GM13977 (cell line): ENCODE measurements at regions of chr22 and their contacts with region 1.

Region 1: DNA sequence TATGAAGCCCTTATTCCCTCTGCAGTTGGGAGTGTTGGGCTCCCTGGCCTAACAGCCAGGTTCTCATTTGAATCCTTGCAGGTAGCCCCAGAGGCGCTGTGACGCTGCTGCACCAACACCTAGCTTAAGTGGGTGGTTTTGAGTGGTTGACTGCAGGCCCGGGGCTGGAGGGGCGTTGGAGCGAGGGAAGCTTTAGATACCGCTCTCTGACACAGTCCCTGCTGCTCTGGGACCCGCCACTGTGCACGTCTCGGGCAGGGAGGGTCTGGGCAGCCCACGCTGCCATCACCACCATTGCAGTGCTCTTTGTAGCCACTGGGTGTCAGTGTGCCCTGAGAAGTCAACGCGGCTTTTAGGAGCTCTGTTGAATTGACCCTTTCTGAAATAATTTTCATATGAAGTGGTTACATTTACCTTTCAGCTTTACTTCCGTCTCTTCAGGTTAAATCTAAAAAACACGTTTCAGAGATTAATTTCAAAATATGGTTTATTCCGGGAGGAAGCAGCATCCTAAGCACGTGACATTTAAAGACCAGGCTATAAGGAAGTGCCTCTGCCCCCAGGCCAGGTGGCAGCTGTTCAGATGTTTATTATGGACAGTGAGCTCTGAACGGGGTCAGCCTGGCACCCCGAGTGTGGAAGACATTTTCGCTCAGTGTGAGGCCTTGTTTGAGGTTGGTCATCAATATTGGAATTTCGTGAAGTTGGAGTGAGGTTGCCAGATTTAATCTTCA is 30.9 kb upstream of the PARVB start:
- DNase-seq: peak; percentile 84
- CTCF ChIP-seq: peak; percentile 98

Region 2: GRCh38 chr22:44075670-44076069 is 82.5 kb after region 1 on chr22:
- in situ Hi-C with region 1: loop called (anchors 5 kb)
- DNase-seq: no peak
- CTCF ChIP-seq: no peak

Region 3: DNA sequence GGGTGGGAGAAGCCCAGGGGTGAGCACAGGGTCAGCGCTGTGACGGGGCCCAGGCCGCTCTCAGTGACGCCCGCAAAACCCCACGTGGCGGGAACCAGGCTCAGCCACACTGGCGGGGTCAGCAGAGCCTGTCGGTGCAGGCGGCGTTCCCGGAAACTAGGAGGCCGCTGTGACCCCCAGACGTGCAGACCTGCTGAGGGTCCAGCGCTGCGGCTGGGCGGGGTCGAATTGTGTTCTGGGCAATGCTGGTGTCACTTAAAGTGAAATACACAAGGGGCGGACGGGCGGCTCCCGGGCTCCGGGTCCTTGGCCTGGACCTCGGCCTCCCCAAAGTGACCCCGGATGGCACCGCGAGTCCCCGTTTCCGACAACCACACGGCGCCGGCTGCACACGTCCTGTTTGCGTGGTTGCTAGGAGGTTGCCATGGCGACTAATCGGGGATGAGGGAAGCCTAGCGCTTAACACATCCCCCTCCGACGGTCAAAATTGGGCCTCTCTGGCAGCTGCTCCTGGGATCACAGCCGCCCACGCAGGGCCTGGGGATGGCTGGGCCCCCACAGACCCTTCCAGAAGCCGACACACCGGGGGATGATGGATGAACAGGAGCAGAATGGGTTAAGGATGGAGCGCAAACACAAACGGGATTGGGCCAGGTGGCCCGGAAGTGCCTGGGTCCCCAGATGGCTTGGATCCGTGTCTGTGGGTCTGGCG is 627.1 kb after region 1 on chr22:
- in situ Hi-C with region 1: loop called (anchors 25 kb)
- DNase-seq: peak; percentile 69
- CTCF ChIP-seq: no peak